Lower lobe of right lung (tissue), 2 donors: ENCODE measurements at regions of chr16 and their contacts with region 1.

Region 1: GRCh38 chr16:48156790-48157209 is 1.0 kb upstream of the ABCC12 start:
- DNase-seq: peak; percentile 91
- ATAC-seq: peak; percentile 93 to 95
- H3K4me3 ChIP-seq: peak overlapping the region; percentile 27
- H3K27ac ChIP-seq: no peak overlapping the region
- H3K4me1 ChIP-seq: peaks cover 12% of the 10 kb centered on the region
- H3K27me3 ChIP-seq: no peaks in the 10 kb centered on the region
- CTCF ChIP-seq: peak; percentile 98

Region 2: DNA sequence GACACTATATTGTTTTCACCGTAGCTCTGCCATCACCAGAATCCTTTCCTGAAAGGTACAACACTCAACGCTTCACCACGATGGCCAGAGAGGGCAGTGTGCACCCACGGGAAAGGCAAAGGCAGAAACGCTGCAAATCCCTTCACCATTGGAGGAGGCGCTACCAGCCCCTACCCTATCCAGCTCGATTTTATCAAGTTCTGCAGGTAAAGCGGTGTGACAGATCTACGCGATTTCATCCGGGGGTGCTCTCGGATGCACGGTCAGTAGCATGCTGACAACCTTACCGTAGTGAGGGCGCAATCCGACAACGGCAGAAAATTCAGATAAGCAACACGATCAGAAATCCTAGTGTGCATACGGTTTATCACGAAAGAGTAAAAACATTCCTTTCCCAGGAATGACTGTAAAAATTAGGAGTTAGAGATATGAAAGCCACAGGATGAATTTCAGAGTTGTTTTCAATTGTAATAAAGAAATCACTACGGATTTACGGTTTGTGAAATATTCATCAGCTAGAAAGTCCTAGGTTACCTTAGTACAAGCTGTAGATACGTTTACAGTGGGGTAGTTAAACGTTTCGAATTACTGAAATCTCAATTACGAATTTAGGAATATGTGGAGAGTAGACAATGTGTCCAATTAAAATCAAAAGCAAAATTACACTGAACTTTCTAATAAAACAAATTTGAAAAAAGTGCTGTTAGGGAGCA is 1014.9 kb before region 1 on chr16:
- intact Hi-C with region 1: loop called (anchors 10 kb)
- DNase-seq: peak; percentile 82
- ATAC-seq: peak; percentile 89 to 93
- H3K4me3 ChIP-seq: peak overlapping the region; percentile 61
- H3K27ac ChIP-seq: no peak overlapping the region
- H3K4me1 ChIP-seq: peaks cover 15% of the 10 kb centered on the region
- H3K27me3 ChIP-seq: peaks cover 13% of the 10 kb centered on the region
- CTCF ChIP-seq: peak; percentile 92

Region 3: DNA sequence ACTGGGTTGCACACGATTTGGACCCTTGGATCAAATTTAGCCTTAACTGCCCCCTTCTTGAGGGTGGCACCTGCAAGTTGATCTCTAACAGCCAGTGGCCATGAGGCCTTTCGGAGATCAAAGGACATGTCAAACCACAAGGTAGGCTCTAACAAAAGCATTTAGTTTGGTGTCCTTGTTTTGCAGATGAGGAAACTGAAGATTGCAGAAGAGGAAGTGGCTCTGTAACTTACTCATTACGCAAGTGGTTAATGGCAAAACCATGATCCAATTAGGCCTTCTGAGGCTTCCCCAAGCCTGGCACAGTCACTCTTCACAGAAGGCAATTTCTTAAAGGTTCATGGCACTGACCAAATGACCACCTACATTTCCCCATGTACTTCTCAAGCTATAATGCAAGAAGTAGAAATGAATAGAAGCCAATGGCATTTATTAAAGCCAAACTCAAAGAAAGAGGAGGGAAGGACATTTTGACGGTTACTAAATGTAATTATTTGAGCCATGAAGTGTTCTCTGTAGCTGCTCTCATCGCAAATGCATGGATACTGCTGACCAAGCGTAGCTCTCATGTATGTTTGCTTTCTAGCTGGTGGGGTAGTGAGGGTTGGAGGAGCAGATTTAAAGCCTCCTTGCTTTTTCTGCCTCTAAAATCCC is 31.8 kb after region 1 on chr16:
- intact Hi-C with region 1: no loop called
- DNase-seq: no peak
- ATAC-seq: peak; percentile 57 to 74
- H3K4me3 ChIP-seq: no peak overlapping the region
- H3K27ac ChIP-seq: no peak overlapping the region
- H3K4me1 ChIP-seq: no peaks in the 10 kb centered on the region
- H3K27me3 ChIP-seq: no peaks in the 10 kb centered on the region
- CTCF ChIP-seq: no peak